ENCODE measurements at regions of chr3 and their contacts with region 1.

Region 1: DNA sequence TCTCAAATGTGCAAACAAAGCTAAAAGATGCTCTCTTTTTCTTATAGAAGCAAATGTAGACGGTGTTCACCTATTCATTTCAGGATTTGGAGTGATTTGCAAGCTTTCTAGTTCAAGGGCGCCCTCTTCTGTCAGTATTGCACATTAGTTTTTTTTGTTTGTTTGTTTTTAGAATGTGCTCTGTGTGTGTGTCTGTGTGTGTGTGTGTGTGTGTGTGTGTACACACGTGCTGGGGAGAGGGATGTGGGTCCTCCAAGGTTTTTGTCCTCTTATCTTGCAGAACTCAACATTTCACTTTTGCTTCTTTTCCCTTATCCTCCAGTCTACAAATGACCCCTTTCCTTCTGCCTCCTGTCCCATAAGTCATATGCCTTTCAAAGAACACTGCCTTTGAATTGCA is 23.5 kb downstream of the DNAH1 start:
- DNase-seq: peak; percentile 37
- H3K4me3 Mint-ChIP-seq: no peak overlapping the region
- H3K27ac Mint-ChIP-seq: no peak overlapping the region
- H3K4me1 Mint-ChIP-seq: peaks cover 7% of the 10 kb centered on the region
- H3K27me3 Mint-ChIP-seq: no peaks in the 10 kb centered on the region

Region 2: DNA sequence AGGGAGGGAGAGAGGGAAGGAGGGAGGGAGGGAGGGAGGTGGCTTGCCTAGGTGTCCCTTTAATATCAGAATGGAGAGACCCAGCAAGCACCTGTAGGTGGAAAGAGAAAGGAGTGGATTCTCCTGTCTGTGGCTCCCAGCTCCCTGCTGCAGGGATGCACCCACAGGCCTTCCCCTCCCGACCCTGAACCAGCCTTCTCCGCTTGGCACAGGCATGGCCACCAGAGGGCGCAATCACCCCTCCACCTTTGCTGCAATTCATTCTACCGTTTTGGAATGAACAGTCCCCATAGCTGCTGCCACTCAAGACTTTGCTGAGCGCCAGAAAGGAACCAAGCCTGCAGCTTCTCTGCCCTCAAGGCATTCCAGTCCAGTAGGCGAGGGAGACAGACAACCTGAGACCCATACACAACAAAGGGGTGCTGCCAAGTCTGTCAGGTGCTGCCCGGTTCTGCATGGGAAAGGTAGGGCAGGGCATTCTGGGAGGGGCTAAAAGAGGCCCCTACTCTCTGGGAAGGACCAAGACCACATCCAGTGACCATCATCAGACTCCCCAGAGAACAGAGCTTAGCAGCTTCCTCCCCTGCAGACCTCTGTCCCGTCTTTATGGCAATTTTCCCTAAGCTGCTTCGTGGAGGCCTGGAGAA is 119.1 kb before region 1 on chr3:
- intact Hi-C with region 1: loop called (anchors 1 kb)
- DNase-seq: peak; percentile 77
- H3K4me3 Mint-ChIP-seq: peak overlapping the region; percentile 15
- H3K27ac Mint-ChIP-seq: no peak overlapping the region
- H3K4me1 Mint-ChIP-seq: peaks cover 57% of the 10 kb centered on the region
- H3K27me3 Mint-ChIP-seq: no peaks in the 10 kb centered on the region

Region 3: GRCh38 chr3:52231502-52232293 is 107.9 kb before region 1 on chr3:
- intact Hi-C with region 1: loop called (anchors 1 kb)
- DNase-seq: peak; percentile 75
- H3K4me3 Mint-ChIP-seq: no peak overlapping the region
- H3K27ac Mint-ChIP-seq: peak overlapping the region; percentile 63
- H3K4me1 Mint-ChIP-seq: peaks cover 19% of the 10 kb centered on the region
- H3K27me3 Mint-ChIP-seq: no peaks in the 10 kb centered on the region

Region 4: GRCh38 chr3:52291508-52292181 is 48.0 kb before region 1 on chr3:
- intact Hi-C with region 1: loop called (anchors 1 kb)
- DNase-seq: no peak
- H3K4me3 Mint-ChIP-seq: no peak overlapping the region
- H3K27ac Mint-ChIP-seq: no peak overlapping the region
- H3K4me1 Mint-ChIP-seq: peaks cover 16% of the 10 kb centered on the region
- H3K27me3 Mint-ChIP-seq: no peaks in the 10 kb centered on the region